ENCODE measurements at regions of chr5 and their contacts with region 1.

Region 1: DNA sequence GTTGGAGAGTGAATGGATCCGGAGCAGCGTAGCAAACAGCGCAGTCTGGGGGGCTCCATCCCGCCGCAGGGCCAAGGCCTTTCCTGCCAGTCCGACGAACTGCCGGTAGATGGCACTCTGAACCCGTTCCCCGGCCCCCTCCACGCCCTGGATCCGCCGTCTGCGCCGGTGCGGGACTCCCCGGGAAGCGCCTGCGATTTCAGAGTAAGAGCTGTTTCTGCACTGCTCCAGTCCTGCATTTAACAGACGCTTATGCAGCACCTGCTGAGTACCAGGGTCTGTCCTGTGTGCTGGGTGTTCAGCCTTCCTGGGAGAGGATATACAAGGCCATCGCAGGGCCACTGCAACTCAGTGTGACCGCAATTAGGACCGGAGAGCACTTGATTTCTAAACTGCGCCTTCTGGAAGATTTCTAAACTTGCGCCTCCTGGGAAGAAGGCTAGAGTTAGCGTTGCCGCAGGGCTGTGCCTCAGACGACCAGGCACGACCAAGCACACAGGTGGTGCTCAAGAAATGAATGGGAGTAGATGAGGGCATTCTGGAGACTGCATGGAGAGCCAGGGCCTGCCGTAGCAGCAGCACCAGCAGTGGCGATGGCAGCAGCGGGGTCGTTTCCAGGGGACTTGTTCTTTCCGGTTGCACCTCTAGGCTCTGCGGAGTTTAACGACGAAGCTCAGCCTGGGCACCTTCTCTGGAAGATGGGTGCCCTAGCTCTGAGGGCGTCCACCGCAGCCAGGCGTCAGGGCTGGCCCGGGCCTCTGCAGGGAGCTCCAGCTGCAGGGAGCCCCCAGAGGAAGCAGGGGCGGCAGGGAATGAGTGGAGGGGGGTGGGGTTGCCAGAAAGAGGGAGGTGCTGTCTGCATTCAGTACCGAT is 14.3 kb upstream of the TIFAB start:
- DNase-seq: peak; percentile 68
- H3K4me3 Mint-ChIP-seq: peak overlapping the region; percentile 18
- H3K27ac Mint-ChIP-seq: no peak overlapping the region
- H3K4me1 Mint-ChIP-seq: peaks cover 3% of the 10 kb centered on the region
- H3K27me3 Mint-ChIP-seq: peaks cover 39% of the 10 kb centered on the region

Region 2: GRCh38 chr5:134803821-134804220 is 662.6 kb before region 1 on chr5:
- intact Hi-C with region 1: no loop called
- DNase-seq: no peak
- H3K4me3 Mint-ChIP-seq: no peak overlapping the region
- H3K27ac Mint-ChIP-seq: no peak overlapping the region
- H3K4me1 Mint-ChIP-seq: peaks cover 2% of the 10 kb centered on the region
- H3K27me3 Mint-ChIP-seq: no peaks in the 10 kb centered on the region

Region 3: GRCh38 chr5:135426102-135427082 is 40.0 kb before region 1 on chr5:
- intact Hi-C with region 1: no loop called
- DNase-seq: peak; percentile 19
- H3K4me3 Mint-ChIP-seq: no peak overlapping the region
- H3K27ac Mint-ChIP-seq: peak overlapping the region; percentile 38
- H3K4me1 Mint-ChIP-seq: peaks cover 9% of the 10 kb centered on the region
- H3K27me3 Mint-ChIP-seq: peaks cover 11% of the 10 kb centered on the region

Region 4: GRCh38 chr5:135551593-135552447 is 85.4 kb after region 1 on chr5:
- intact Hi-C with region 1: loop called (anchors 1 kb)
- DNase-seq: peak; percentile 44
- H3K4me3 Mint-ChIP-seq: no peak overlapping the region
- H3K27ac Mint-ChIP-seq: no peak overlapping the region
- H3K4me1 Mint-ChIP-seq: peaks cover 1% of the 10 kb centered on the region
- H3K27me3 Mint-ChIP-seq: peaks cover 53% of the 10 kb centered on the region

Region 5: GRCh38 chr5:135565725-135566421 is 99.5 kb after region 1 on chr5:
- intact Hi-C with region 1: loop called (anchors 1 kb)
- DNase-seq: peak; percentile 46
- H3K4me3 Mint-ChIP-seq: no peak overlapping the region
- H3K27ac Mint-ChIP-seq: no peak overlapping the region
- H3K4me1 Mint-ChIP-seq: peaks cover 1% of the 10 kb centered on the region
- H3K27me3 Mint-ChIP-seq: peaks cover 5% of the 10 kb centered on the region

Region 6: GRCh38 chr5:135829681-135830383 is 363.4 kb after region 1 on chr5:
- intact Hi-C with region 1: loop called (anchors 10 kb)
- DNase-seq: peak; percentile 17
- H3K4me3 Mint-ChIP-seq: no peak overlapping the region
- H3K27ac Mint-ChIP-seq: no peak overlapping the region
- H3K4me1 Mint-ChIP-seq: no peaks in the 10 kb centered on the region
- H3K27me3 Mint-ChIP-seq: peaks cover 13% of the 10 kb centered on the region

Measured in activated T-helper 2 cell treated with anti-CD3 and anti-CD28 coated beads, Interferon-gamma antibody, Interleukin-2, Interleukin-4, amounts not matched to agents 10 μg/mL and 5 μg/mL and 100 μg/mL, durations not matched to agents 14 hours and 24 hours and 36 hours (primary cell).